A673 (cell line): ENCODE measurements at regions of chr2 and their contacts with region 1.

Region 1: DNA sequence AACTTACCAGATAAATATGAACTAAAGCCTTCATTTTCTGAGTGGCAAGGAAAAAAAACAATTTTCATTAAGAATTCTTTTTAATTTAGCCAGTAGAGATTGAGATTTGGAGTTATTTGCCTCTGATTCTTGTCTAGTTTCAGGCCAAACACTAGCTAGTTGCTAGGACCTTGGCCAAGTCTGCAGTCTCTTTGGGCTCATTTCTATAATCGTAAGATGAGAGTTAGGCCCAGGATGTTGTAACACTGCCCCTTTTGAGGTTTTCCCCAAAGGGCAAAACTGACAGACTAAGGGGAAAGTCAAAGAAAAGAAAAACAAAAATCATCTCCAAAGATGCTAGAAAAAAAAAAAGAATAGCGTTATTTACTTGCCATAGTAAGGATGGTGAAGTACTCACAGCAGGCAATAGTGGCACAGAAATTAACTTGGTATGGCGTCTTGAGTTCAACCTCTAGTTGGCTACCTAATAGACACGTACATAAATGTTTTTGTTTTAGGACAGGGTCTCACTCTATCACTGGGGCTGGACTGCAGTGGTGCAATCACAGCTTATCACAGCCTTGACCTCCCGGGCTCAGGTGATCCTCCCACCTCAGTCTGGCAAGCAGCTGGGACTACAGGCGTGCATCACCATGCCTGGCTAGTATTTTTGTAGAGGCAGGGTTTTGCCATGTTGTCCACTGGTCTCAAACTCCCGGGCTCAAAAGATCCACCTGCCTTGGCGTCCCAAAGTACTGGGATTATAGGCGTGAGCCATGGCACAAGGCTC is 23.0 kb upstream of the ADAM17 start:
- DNase-seq: no peak
- H3K4me3 ChIP-seq: no peak overlapping the region
- H3K27ac ChIP-seq: no peak overlapping the region
- H3K4me1 ChIP-seq: no peaks in the 10 kb centered on the region
- H3K27me3 ChIP-seq: no peaks in the 10 kb centered on the region
- CTCF ChIP-seq: no peak

Region 2: GRCh38 chr2:8364668-8365067 is 1214.0 kb before region 1 on chr2:
- CTCF ChIA-PET with region 1: no interaction called
- POLR2A ChIA-PET with region 1: no interaction called
- intact Hi-C with region 1: no loop called
- DNase-seq: no peak
- H3K4me3 ChIP-seq: no peak overlapping the region
- H3K27ac ChIP-seq: no peak overlapping the region
- H3K4me1 ChIP-seq: peaks cover 10% of the 10 kb centered on the region
- H3K27me3 ChIP-seq: no peaks in the 10 kb centered on the region
- CTCF ChIP-seq: no peak

Region 3: GRCh38 chr2:9595746-9596145 is 17.1 kb after region 1 on chr2:
- CTCF ChIA-PET with region 1: interaction called, 10 read pairs
- POLR2A ChIA-PET with region 1: no interaction called
- intact Hi-C with region 1: no loop called
- DNase-seq: no peak
- H3K4me3 ChIP-seq: no peak overlapping the region
- H3K27ac ChIP-seq: no peak overlapping the region
- H3K4me1 ChIP-seq: peaks cover 26% of the 10 kb centered on the region
- H3K27me3 ChIP-seq: no peaks in the 10 kb centered on the region
- CTCF ChIP-seq: no peak